MCF 10A (cell line): ENCODE measurements at regions of chr9 and their contacts with region 1.

Region 1: GRCh38 chr9:113876151-113876992 is at the start of gene ZNF618:
- DNase-seq: peak; percentile 32
- H3K4me3 Mint-ChIP-seq: peak within 1 kb of the TSS; percentile 85
- H3K27ac Mint-ChIP-seq: peak within 1 kb of the TSS; percentile 81
- H3K4me1 Mint-ChIP-seq: peaks cover 12% of the 10 kb centered on the region
- H3K27me3 Mint-ChIP-seq: no peaks in the 10 kb centered on the region
- CTCF ChIP-seq: peak; percentile 9
- total RNA-seq, gene ZNF618: 4.8 and 6.6 TPM in 2 replicates

Region 2: DNA sequence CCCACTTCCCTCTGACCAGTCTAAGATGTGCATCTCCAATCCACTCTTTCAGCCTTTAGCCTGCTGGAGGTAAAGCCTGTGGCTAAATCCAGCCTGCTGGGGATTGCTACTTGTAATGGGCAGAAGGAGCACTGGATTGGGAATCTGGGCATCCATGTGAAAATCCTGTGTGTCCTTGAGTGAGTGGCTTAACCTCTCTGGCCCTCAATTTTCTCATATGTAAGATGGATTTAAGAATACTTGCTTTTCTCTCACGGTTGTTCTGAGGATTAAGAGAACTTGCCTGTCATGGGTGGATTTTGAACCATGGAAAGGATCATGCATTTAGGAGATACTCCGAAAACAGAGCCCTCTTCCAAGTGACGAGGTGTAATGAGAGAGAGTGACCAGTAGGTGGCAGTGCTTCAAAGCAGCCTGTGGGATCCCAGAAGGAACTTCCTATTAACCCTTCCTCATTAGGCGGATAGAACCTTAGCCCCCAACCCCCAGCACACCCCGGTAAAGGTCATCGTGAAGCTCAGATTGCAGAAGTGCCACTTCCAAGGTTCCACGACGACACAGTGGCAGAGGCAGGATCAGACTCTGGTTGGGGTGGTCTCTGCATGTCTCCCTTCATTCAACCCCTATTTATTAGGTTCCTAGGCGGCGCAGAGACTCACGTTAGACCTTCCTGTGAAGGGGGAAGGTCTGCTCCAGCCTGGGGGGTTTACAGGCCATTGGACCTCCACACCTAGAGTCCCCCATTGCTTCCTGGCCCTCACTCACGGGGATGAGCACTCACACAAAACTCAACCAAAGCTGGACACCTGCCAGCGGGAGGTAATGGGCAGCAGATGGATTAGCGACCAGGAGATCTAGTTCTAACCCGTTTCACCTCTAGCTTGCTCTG is 69.0 kb before region 1 on chr9:
- CTCF ChIA-PET with region 1: interaction called, 20 read pairs
- POLR2A ChIA-PET with region 1: interaction called, 4 read pairs
- intact Hi-C with region 1: loop called (anchors 1 kb)
- DNase-seq: peak; percentile 66
- H3K4me3 Mint-ChIP-seq: peak overlapping the region; percentile 35
- H3K27ac Mint-ChIP-seq: no peak overlapping the region
- H3K4me1 Mint-ChIP-seq: peaks cover 23% of the 10 kb centered on the region
- H3K27me3 Mint-ChIP-seq: peaks cover 3% of the 10 kb centered on the region
- CTCF ChIP-seq: peak; percentile 90